ENCODE measurements at regions of chr10 and their contacts with region 1.

Region 1: DNA sequence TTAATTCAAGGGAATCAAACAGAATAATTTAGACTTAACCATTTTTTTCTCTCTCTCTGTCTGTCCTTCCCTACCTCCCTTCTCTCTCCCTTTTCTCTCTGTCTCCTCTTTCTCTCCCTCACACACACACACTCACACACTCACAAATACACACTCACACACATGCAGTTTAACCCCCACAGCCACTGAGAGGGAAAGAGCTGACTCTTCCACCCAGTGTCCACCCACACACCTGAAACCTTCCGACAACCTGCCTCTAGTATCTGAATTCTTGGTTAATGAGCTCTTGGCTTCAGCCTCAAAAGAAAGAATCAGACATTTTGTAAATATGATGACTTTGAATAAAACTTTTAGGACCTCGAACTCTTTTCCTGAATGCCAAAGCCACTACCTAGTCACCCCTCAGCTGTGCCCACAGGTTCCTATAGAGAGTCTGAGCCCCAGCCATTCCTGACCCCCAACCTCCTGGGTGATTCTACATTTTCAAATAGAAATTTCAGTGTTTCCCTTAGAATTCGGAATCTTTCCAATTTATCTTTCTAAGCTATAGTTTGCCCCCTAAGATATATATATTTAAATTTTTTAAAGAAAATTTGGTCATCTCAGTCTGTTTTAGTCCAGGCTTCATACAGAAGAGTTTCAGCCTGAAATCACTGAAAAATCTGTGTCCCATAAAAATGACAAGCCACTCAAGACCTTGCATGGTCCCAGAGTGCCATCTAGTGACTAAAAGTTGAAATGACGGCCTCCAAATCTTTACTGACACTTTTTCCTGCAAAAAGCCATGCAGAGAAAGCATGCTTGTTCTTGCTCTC is 202.8 kb downstream of the IPMK start:
- DNase-seq: peak; percentile 92
- ATAC-seq: peak; percentile 61
- H3K4me3 ChIP-seq: no peak overlapping the region
- H3K27ac ChIP-seq: no peak overlapping the region
- H3K4me1 ChIP-seq: peaks cover 12% of the 10 kb centered on the region; the same call in 1 of the 2 replicates
- H3K27me3 ChIP-seq: no peaks in the 10 kb centered on the region
- CTCF ChIP-seq: peak; percentile 96

Region 2: DNA sequence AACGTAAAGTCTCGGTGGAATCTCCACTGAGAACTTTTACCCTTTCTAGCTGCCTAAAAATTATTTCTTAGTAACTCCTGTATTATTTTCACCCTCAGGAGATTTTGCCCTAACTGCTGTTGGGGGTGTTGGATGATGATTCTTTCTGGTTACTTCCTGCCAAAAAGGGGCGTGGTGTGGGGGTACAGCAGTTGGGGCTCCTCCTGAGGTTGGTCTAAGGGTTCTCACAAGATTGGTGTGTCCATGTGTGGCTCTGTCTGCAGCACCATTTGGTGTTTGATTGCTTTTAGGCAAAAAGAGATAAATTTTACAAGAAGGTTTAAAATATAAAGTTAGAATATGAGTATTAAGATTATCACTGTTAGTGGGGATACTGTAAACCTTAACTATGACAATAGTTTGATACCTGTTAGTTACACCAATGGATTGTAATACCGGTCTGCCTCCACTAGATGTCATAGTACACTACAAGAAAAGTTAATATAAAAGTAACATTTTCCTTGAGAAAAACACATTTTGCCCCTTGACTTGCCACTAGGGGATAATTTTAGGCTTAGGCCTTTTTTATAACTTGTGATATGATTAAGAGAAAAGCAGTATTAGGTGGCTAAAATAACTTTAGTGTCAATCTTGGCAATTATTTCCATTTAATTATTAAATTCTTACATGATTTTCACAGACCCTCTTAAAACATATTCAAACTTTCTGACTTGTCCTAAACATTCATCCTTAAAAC is 725.9 kb before region 1 on chr10:
- CTCF ChIA-PET with region 1: no interaction called
- POLR2A ChIA-PET with region 1: no interaction called
- intact Hi-C with region 1: loop called (anchors 1 kb)
- DNase-seq: peak; percentile 86
- ATAC-seq: peak; percentile 77
- H3K4me3 ChIP-seq: no peak overlapping the region
- H3K27ac ChIP-seq: no peak overlapping the region
- H3K4me1 ChIP-seq: no peaks in the 10 kb centered on the region
- H3K27me3 ChIP-seq: no peaks in the 10 kb centered on the region
- CTCF ChIP-seq: peak; percentile 91

Region 3: DNA sequence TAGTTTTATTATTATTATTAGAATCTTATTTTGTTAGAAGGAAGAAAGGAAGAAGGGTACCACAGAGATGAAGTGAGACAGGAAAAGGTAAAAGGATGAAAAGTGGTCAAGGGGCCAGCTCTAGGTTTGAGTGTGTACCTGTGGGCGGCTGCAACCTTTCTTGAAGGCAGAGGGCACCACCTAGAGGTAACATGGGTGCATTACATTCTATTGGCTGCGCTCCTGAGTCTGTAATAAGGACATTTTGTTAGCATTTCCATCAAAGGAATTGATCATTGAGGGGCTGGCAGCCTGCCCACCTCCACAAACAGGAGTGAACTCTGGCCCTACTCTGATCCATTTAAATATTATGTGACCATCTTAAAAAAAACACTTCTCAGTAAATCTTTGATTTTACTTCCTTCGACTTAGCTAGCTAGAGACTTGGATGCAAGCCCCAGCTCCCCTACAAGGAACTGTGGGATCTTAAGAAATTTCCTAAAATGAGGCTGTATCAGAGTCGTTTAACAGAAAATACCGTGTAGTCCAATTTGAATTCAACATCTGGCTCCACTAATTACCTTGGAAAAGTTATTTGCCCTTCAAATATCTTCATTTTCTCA is 407.7 kb before region 1 on chr10:
- CTCF ChIA-PET with region 1: no interaction called
- POLR2A ChIA-PET with region 1: no interaction called
- intact Hi-C with region 1: loop called (anchors 1 kb)
- DNase-seq: peak; percentile 89
- ATAC-seq: peak; percentile 95
- H3K4me3 ChIP-seq: no peak overlapping the region
- H3K27ac ChIP-seq: no peak overlapping the region
- H3K4me1 ChIP-seq: no peaks in the 10 kb centered on the region
- H3K27me3 ChIP-seq: no peaks in the 10 kb centered on the region
- CTCF ChIP-seq: peak; percentile 93

Region 4: DNA sequence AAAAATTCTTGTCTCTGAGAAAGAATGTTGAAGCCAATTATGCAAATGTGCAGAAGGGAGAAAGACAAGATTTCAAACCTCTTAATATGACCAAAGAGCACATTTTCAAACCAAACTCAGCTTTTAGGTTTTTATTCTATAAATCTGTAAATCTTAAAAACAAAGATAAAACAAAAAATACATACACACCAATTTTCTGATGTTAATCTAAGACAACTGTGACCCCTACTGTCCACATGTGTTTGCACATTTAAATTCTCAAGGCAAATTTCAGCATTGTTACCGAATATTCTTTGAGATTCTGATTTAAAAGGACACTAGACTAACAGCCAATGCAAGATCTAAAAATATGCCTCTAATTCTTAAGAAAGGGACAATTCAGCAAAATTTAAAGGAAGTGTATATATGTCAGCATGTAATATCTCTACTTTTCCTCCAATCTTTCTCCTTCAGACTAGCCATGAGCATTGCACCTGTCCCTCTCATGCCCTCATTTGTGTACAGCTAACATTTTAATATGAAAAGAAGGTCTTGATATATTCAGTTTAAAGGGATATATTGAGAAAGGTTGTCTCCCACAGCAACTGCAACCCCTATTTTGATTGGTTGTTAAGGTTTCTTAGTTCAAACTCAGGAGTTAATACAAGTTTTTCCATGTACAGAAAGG is 215.1 kb before region 1 on chr10:
- CTCF ChIA-PET with region 1: no interaction called
- POLR2A ChIA-PET with region 1: no interaction called
- intact Hi-C with region 1: loop called (anchors 1 kb)
- DNase-seq: peak; percentile 67
- ATAC-seq: peak; percentile 67
- H3K4me3 ChIP-seq: no peak overlapping the region
- H3K27ac ChIP-seq: no peak overlapping the region
- H3K4me1 ChIP-seq: no peaks in the 10 kb centered on the region
- H3K27me3 ChIP-seq: no peaks in the 10 kb centered on the region
- CTCF ChIP-seq: peak; percentile 89

Region 5: GRCh38 chr10:58023341-58024073 is 41.4 kb before region 1 on chr10:
- CTCF ChIA-PET with region 1: no interaction called
- POLR2A ChIA-PET with region 1: no interaction called
- intact Hi-C with region 1: loop called (anchors 1 kb)
- DNase-seq: peak; percentile 97
- ATAC-seq: peak; percentile 92
- H3K4me3 ChIP-seq: no peak overlapping the region
- H3K27ac ChIP-seq: peak overlapping the region; percentile 82
- H3K4me1 ChIP-seq: peaks cover 25% of the 10 kb centered on the region
- H3K27me3 ChIP-seq: no peaks in the 10 kb centered on the region
- CTCF ChIP-seq: no peak

Region 6: DNA sequence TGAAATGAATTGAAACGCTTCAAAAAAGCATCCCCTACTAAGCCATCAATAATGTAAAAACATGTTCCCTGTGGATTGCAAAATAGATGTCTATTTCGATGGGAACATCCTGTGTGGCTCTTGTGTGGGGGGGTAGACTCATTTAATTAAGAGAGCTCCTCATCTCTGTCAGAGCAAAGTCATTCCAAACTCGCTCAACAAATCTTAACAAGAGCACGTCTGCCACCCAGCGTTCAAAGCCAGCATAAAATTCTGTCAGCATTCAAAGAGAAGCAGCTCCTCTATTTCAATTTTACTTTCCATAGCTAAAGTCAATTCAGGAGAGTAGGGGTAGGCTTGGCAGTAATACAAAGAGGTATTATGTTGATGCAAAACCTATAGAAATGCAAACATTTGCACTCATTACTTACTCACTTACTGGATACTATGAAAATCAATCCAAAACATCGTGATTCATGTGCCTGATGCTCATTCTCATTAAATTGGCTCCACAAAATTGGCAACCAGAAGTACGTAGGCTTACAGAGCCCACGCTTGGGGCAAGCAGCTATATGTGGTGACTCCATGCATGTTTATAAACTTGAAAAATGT is 87.8 kb after region 1 on chr10:
- CTCF ChIA-PET with region 1: interaction called, 5 read pairs
- POLR2A ChIA-PET with region 1: no interaction called
- intact Hi-C with region 1: loop called (anchors 1 kb)
- DNase-seq: peak; percentile 91
- ATAC-seq: peak; percentile 35
- H3K4me3 ChIP-seq: no peak overlapping the region
- H3K27ac ChIP-seq: no peak overlapping the region
- H3K4me1 ChIP-seq: peaks cover 17% of the 10 kb centered on the region
- H3K27me3 ChIP-seq: 0 out of 2 replicates have a peak, but pooled peaks cover 5% of the 10 kb centered on the region
- CTCF ChIP-seq: peak; percentile 96

Measured in PC-3 (cell line).